A549 (cell line): ENCODE measurements at regions of chr5 and their contacts with region 1.

Region 1: GRCh38 chr5:168693297-168693696 is 114.1 kb upstream of the PANK3 start:
- DNase-seq: no peak
- ATAC-seq: no peak
- H3K4me3 ChIP-seq: no peak overlapping the region
- H3K27ac ChIP-seq: no peak overlapping the region
- H3K4me1 ChIP-seq: no peaks in the 10 kb centered on the region
- CTCF ChIP-seq: no peak
- EP300 ChIP-seq: no peak
- POLR2A ChIP-seq: no peak
- RAD21 ChIP-seq: no peak

Region 2: DNA sequence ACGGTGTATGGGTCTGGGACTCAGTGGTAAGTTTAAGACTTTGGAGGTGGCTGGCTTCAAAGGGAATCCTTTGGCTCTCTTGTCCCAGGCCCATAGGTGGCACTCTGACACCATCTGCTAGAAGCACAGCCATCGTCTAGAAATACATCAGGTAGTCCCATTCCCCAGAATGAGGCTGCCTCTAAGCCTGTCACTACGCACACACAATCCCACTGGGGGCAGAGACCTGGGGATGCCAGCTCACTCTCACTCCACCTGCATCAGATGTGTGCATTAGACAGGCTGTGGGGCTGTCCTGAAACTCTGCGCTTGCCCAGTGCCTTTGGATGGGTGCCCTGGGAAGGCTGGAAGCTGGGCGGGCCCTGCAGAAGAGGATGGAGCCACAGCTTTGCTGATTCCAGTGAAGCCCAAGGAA is 13.4 kb after region 1 on chr5:
- CTCF ChIA-PET with region 1: interaction called, 25 read pairs
- POLR2A ChIA-PET with region 1: no interaction called
- DNase-seq: peak; percentile 36 to 49
- ATAC-seq: peak; percentile 80 to 87
- H3K4me3 ChIP-seq: no peak overlapping the region
- H3K27ac ChIP-seq: no peak overlapping the region
- H3K4me1 ChIP-seq: no peaks in the 10 kb centered on the region; the same call in 2 of the 3 replicates
- CTCF ChIP-seq: peak; percentile 69
- EP300 ChIP-seq: no peak
- POLR2A ChIP-seq: no peak
- RAD21 ChIP-seq: peak; percentile 83 to 85